CD14-positive monocyte (primary cell): ENCODE measurements at regions of chr20 and their contacts with region 1.

Region 1: DNA sequence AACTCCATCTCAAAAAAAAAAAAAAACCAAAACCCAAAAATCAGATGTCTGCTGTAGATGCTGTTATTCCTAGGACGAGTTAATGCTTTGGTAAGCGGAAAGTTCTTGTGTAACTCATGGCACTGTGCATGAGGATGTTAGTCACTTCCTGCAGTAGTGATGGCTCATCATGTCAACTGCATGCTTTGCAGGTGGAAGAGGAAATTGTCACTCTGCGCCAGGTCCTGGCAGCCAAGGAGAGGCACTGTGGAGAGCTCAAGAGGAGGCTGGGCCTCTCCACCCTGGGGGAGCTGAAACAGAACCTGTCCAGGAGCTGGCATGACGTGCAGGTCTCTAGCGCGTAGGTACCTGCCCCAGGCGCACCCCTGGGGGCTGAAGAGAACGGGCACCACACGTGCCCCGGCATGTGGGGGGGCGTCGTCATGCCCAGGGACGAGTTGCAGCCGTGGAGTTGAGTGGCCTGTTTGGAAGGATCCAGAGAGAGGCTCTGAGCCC is 8.5 kb downstream of the TPD52L2 start:
- DNase-seq: peak; percentile 97 to 99 (median 99)
- H3K4me3 ChIP-seq: peak overlapping the region in 1 of 3 experiments; percentile 60
- H3K4me3 Mint-ChIP-seq: peak overlapping the region; percentile 71 to 78
- H3K27ac ChIP-seq: peak overlapping the region; percentile 99 to 100
- H3K27ac Mint-ChIP-seq: peak overlapping the region; percentile 97 to 100 (median 99)
- H3K4me1 ChIP-seq: peaks cover 41 to 65% of the 10 kb centered on the region in 2 donors
- H3K4me1 Mint-ChIP-seq: peaks cover 56% of the 10 kb centered on the region
- H3K27me3 ChIP-seq: no peaks in the 10 kb centered on the region
- H3K27me3 Mint-ChIP-seq: peaks cover 0 to 3% (median 0%) of the 10 kb centered on the region in 3 donors
- CTCF ChIP-seq: no peak

Region 2: GRCh38 chr20:63894358-63895201 is 21.1 kb after region 1 on chr20 and contains the start of gene DNAJC5:
- intact Hi-C with region 1: loop called in 1 of 2 experiments (anchors 1 kb)
- DNase-seq: peak; percentile 95 to 96 (median 95)
- H3K4me3 ChIP-seq: peak within 1 kb of the TSS; percentile 80 to 96 (median 80)
- H3K4me3 Mint-ChIP-seq: peak within 1 kb of the TSS; percentile 92 to 95
- H3K27ac ChIP-seq: peak within 1 kb of the TSS; percentile 90 to 93
- H3K27ac Mint-ChIP-seq: peak within 1 kb of the TSS; percentile 96 to 99 (median 98)
- H3K4me1 ChIP-seq: peaks cover 52 to 60% of the 10 kb centered on the region in 2 donors
- H3K4me1 Mint-ChIP-seq: peaks cover 55% of the 10 kb centered on the region
- H3K27me3 ChIP-seq: no peaks in the 10 kb centered on the region
- H3K27me3 Mint-ChIP-seq: no peaks in the 10 kb centered on the region
- CTCF ChIP-seq: no peak
- polyA plus RNA-seq, gene DNAJC5: 5.9 to 44.4 (median 7.4) TPM